ENCODE measurements at regions of chr13 and their contacts with region 1.

Region 1: GRCh38 chr13:100573121-100573520 is 15.5 kb downstream of the GGACT start:
- DNase-seq: peak; percentile 47
- H3K4me3 Mint-ChIP-seq: no peak overlapping the region
- H3K27ac Mint-ChIP-seq: no peak overlapping the region
- H3K4me1 Mint-ChIP-seq: peaks cover 16% of the 10 kb centered on the region
- H3K27me3 Mint-ChIP-seq: no peaks in the 10 kb centered on the region

Region 2: GRCh38 chr13:100138859-100139491 is 434.1 kb before region 1 on chr13:
- intact Hi-C with region 1: no loop called
- DNase-seq: no peak
- H3K4me3 Mint-ChIP-seq: no peak overlapping the region
- H3K27ac Mint-ChIP-seq: no peak overlapping the region
- H3K4me1 Mint-ChIP-seq: peaks cover 6% of the 10 kb centered on the region
- H3K27me3 Mint-ChIP-seq: no peaks in the 10 kb centered on the region

Region 3: GRCh38 chr13:100454876-100455275 is 118.2 kb before region 1 on chr13:
- intact Hi-C with region 1: no loop called
- DNase-seq: no peak
- H3K4me3 Mint-ChIP-seq: no peak overlapping the region
- H3K27ac Mint-ChIP-seq: no peak overlapping the region
- H3K4me1 Mint-ChIP-seq: peaks cover 5% of the 10 kb centered on the region
- H3K27me3 Mint-ChIP-seq: peaks cover 6% of the 10 kb centered on the region

Region 4: GRCh38 chr13:100530671-100531213 is 42.4 kb before region 1 on chr13:
- intact Hi-C with region 1: no loop called
- DNase-seq: no peak
- H3K4me3 Mint-ChIP-seq: no peak overlapping the region
- H3K27ac Mint-ChIP-seq: no peak overlapping the region
- H3K4me1 Mint-ChIP-seq: no peaks in the 10 kb centered on the region
- H3K27me3 Mint-ChIP-seq: no peaks in the 10 kb centered on the region

Region 5: GRCh38 chr13:100588331-100589177 is 15.4 kb after region 1 on chr13 and contains the start of gene GGACT:
- intact Hi-C with region 1: loop called (anchors 1 kb)
- DNase-seq: peak; percentile 78
- H3K4me3 Mint-ChIP-seq: peak within 1 kb of the TSS; percentile 78
- H3K27ac Mint-ChIP-seq: peak within 1 kb of the TSS; percentile 89
- H3K4me1 Mint-ChIP-seq: peaks cover 42% of the 10 kb centered on the region
- H3K27me3 Mint-ChIP-seq: no peaks in the 10 kb centered on the region
- total RNA-seq, gene GGACT: 5.5 and 7.7 TPM in 2 replicates

Region 6: GRCh38 chr13:100721885-100722512 is 148.9 kb after region 1 on chr13:
- intact Hi-C with region 1: loop called (anchors 2 kb)
- DNase-seq: peak; percentile 17
- H3K4me3 Mint-ChIP-seq: no peak overlapping the region
- H3K27ac Mint-ChIP-seq: no peak overlapping the region
- H3K4me1 Mint-ChIP-seq: no peaks in the 10 kb centered on the region
- H3K27me3 Mint-ChIP-seq: peaks cover 5% of the 10 kb centered on the region

Region 7: GRCh38 chr13:101127741-101128353 is 554.7 kb after region 1 on chr13:
- intact Hi-C with region 1: loop called (anchors 1 kb)
- DNase-seq: no peak
- H3K4me3 Mint-ChIP-seq: no peak overlapping the region
- H3K27ac Mint-ChIP-seq: no peak overlapping the region
- H3K4me1 Mint-ChIP-seq: no peaks in the 10 kb centered on the region
- H3K27me3 Mint-ChIP-seq: no peaks in the 10 kb centered on the region

Measured in activated T-helper 2 cell treated with anti-CD3 and anti-CD28 coated beads, Interferon-gamma antibody, Interleukin-2, Interleukin-4, amounts not matched to agents 10 μg/mL and 5 μg/mL and 100 μg/mL, durations not matched to agents 14 hours and 24 hours and 36 hours (primary cell).